ENCODE measurements at regions of chr9 and their contacts with region 1.

Region 1: DNA sequence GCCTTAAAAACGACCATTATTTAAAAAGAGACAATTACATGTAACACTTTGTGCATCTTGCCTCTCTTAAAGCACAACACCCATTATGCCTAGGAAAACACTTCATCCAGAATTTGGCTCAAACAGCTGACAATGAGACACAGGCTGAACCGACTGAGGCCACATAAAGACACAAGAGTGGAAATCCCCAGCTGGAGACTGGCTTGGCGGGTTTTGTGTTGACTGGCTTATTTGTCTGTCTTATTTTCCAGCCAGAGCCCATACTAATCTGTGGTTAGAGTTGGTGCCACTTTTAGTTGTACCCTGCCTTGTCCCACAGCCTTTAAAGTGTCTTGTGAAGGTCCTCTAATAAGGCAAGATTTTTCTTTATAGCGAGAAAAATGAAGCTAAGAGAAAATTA is 21.2 kb downstream of the TRIM14 start:
- DNase-seq: no peak
- ATAC-seq: no peak
- H3K4me3 ChIP-seq: no peak overlapping the region
- H3K27ac ChIP-seq: no peak overlapping the region
- H3K4me1 ChIP-seq: peaks cover 0 to 24% (median 0%) of the 10 kb centered on the region in 9 donors
- H3K27me3 ChIP-seq: peaks cover 0 to 9% (median 0%) of the 10 kb centered on the region in 7 donors
- CTCF ChIP-seq: no peak

Region 2: DNA sequence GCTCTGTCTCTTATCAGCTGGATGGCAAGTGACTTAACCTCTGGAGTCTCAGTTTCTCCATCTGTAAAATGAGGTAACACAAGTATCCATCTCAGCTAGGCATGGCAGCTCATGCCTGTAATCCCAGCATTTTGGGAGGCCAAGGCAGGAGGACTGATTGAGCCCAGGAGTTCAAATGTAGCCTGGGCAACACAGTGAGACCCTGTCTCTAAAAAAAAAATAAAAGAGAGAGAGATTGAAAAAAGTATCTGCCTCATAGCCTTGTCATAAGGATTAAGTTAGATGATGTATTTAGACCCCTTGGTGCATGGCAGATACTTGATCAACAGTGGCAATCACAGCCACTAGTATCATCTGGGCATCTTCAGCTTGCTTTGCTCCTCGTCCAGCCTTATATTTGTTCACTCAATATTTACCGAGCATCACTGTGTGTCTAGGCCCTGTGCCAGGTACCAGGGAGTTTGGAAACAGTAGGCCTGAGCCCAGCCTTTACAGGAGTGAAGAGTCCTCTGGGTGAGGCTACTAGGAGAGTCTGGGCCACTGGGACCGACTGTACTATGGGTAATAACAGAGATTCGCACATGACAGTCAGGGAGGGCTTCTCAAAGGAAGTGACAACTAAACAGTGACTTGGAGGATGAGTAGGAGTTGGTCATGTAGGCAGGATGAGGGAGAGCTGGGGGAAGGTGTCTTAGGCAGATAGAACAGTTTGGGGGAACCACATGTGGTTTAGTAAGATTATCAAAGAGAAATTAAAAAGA is 60.4 kb after region 1 on chr9:
- intact Hi-C with region 1: loop called in 1 of 10 experiments (anchors 10 kb)
- DNase-seq: no peak
- ATAC-seq: no peak
- H3K4me3 ChIP-seq: no peak overlapping the region
- H3K27ac ChIP-seq: no peak overlapping the region
- H3K4me1 ChIP-seq: no peaks in the 10 kb centered on the region
- H3K27me3 ChIP-seq: no peaks in the 10 kb centered on the region
- CTCF ChIP-seq: no peak

Measured in heart right ventricle (tissue), 16 donors.